ENCODE measurements at regions of chr12 and their contacts with region 1.

Region 1: GRCh38 chr12:52156736-52157565 is 34.9 kb downstream of the KRT80 start:
- DNase-seq: peak; percentile 62
- H3K4me3 Mint-ChIP-seq: no peak overlapping the region
- H3K27ac Mint-ChIP-seq: no peak overlapping the region
- H3K4me1 Mint-ChIP-seq: peaks cover 11% of the 10 kb centered on the region
- H3K27me3 Mint-ChIP-seq: peaks cover 2% of the 10 kb centered on the region

Region 2: DNA sequence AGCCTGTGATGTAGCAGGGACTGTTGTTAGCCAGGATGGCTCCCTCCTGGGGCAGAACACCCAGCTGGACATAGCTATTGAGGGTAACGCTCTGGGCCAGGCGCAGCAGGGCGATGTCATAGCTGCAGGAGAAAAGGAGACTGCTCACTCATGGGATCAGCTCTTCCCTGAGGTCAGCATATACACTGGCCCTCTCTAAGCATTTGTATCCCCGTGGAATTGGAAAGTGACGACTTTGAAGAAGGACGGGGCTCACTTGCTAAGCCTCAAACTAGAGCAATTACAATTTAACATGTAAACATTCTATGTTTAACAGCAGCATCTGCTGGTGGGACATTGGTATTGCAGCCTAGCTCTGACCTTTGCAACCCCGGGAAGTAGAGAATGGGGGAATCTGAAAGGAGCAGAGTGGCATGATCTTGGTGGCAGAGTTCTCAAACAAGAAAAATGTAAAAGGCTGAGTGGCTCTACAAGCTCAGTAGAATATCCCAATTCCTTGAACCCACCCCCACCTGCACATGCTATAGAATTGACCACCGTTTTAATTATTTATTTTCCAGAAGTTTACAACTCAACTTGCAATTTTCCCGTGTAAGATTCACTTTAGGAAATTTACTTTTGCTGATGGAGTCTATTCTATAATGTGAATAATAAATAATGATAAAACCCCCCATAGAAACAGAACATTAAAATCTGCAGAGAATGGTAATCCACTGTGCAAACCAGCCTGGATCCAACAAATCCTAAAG is 815.5 kb before region 1 on chr12:
- intact Hi-C with region 1: no loop called
- DNase-seq: peak; percentile 60
- H3K4me3 Mint-ChIP-seq: no peak overlapping the region
- H3K27ac Mint-ChIP-seq: no peak overlapping the region
- H3K4me1 Mint-ChIP-seq: peaks cover 11% of the 10 kb centered on the region
- H3K27me3 Mint-ChIP-seq: no peaks in the 10 kb centered on the region

Region 3: DNA sequence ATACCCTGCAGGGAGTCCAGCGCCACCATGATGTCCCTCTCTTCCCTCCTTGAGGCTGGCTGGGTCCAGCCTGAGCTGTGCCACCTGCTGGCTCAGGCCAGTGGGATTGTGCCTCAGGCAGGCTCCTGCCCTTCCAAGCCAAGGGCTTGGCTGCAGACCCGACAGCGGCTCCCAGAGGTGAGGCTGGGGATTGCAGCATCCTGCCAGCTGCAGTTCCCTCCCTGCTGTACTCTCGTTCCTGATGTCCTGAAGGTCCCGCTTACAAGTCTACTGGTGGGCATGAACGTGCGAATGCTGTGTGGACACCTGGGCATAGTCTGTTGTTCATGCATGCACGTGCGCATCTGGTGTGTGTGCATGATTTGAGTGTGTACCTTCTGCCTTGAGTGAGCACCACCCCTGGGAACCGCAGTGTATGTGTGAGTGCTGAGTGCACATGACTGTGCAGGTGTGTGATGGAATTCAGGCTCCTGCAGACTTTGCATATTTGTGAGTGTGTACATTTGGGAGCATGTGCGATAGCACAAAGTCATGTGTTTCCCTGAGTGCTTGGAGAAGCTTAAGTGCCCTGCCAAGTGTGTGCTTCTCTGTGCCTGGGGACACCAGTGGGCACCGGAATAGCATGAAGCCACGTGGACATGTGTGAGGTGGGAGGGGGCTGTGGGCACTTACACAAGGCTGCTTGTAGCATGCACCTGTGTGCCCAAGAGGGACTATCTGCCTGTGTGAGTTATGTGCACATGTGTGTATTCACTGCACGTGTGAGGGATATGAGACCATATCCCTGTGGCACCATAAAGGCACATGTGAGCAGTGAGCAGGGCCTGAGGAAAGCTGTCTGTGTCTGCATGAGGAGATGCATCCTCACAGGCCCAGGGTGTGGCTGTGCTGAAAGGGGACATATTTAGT is 56.8 kb after region 1 on chr12:
- intact Hi-C with region 1: loop called (anchors 5 kb)
- DNase-seq: peak; percentile 53
- H3K4me3 Mint-ChIP-seq: no peak overlapping the region
- H3K27ac Mint-ChIP-seq: no peak overlapping the region
- H3K4me1 Mint-ChIP-seq: peaks cover 2% of the 10 kb centered on the region
- H3K27me3 Mint-ChIP-seq: peaks cover 8% of the 10 kb centered on the region

Region 4: GRCh38 chr12:52327052-52327829 is 170.3 kb after region 1 on chr12:
- intact Hi-C with region 1: loop called (anchors 2 kb)
- DNase-seq: peak; percentile 68
- H3K4me3 Mint-ChIP-seq: no peak overlapping the region
- H3K27ac Mint-ChIP-seq: no peak overlapping the region
- H3K4me1 Mint-ChIP-seq: peaks cover 11% of the 10 kb centered on the region
- H3K27me3 Mint-ChIP-seq: peaks cover 22% of the 10 kb centered on the region

Region 5: DNA sequence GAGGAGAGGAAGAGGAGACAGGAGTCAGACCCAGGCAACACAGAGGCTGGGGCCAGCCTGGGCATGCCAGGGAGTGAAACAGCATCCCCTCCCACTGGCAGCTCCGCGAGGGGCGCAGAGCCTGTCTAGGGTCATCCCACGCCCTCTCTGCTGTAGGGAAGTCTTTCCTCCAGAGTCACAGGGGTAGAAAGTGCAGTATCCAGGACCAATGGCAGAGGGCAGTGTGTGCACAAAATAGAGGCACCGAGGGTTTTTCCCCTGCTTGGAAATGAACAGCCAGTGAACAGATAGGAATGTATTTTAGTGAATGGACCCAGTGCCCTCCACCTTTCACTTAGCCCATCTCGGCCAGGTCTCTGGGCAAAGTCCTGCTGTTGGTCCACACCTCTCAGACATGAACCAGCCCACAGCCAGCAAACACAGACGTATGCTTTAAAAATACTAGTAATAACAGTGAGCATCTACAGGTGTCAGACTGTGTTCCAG is 426.1 kb after region 1 on chr12:
- intact Hi-C with region 1: loop called (anchors 10 kb)
- DNase-seq: peak; percentile 52
- H3K4me3 Mint-ChIP-seq: no peak overlapping the region
- H3K27ac Mint-ChIP-seq: no peak overlapping the region
- H3K4me1 Mint-ChIP-seq: peaks cover 32% of the 10 kb centered on the region
- H3K27me3 Mint-ChIP-seq: peaks cover 13% of the 10 kb centered on the region

Region 6: DNA sequence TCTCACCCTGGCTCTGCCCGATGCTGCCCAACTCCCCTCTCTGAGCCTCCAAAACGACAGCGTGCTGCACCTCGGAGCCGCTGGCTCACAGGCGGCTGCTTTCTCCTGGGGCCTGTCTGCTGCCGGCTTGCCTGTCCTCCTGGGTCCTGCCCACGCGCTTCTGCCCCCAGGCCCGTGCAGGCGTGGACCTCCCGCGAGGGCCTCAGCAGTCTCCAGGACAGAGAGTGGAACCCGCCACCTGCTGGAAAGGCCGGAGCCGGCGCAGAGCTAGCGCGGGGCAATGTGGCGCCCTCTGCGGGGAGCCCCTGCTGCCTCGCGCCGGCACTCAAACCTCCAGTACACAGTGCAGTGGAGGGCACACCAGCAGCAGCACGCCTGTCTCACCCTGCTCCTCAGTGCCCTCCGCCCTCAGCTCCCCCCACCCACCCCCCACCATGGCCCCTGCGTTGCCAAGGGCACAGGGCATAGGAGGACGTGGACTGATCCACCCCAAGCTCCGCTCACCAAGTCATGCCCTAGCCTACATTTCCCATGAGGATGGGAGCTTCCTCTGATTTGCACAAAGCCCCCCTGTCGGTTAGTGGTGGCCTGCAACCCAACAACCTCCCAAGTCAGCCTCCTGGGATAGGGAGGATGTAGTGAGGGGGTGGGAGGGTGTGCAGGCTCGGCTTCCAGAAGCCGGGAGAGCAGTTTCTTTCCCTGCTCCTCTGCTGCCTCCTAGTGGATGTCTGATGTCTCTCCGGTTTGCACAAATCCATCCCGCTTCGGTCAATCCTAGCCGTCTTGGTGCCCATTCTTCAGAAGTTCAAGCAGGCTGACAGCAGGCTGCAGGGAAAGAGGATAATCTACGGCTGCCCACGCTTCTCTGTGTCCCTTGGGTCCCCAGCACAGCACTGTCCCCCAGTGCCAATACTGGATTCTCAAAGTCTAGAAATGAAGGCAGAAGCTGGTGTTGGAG is 722.7 kb after region 1 on chr12:
- intact Hi-C with region 1: loop called (anchors 2 kb)
- DNase-seq: peak; percentile 72
- H3K4me3 Mint-ChIP-seq: peak overlapping the region; percentile 65
- H3K27ac Mint-ChIP-seq: no peak overlapping the region
- H3K4me1 Mint-ChIP-seq: peaks cover 7% of the 10 kb centered on the region
- H3K27me3 Mint-ChIP-seq: peaks cover 8% of the 10 kb centered on the region